ENCODE measurements at regions of chr11 and their contacts with region 1.

Region 1: GRCh38 chr11:12043959-12044819 is 35.8 kb upstream of the DKK3 start:
- DNase-seq: peak; percentile 98
- H3K4me3 ChIP-seq: no peak overlapping the region
- H3K27me3 ChIP-seq: no peaks in the 10 kb centered on the region
- CTCF ChIP-seq: peak; percentile 81

Region 2: DNA sequence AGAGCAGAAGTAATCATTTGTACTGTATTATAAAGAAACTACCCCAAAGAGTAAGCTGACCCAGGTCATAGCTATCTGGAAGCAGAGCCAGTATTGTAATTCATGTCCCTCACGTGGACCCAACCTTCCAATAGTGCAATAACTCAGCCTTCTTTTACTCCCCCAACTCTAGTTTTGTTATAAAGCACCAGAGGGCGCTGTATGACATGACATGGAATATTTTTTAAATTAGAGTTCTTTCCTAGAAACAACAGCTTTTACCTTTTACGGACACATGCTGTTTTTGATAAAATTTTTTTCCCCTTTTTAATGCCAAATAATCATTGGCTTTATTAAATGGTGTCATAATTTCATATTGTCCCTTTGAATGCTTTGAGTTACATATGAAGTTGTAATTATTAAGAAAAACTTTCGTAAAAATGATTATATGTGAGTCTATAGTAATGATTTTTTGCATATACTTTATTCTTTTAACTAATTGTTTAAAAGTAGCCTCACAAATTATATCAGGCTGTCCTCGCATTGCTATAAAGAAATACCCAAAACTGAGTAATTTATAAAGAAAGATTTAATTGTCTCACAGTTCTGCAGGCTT is 112.6 kb before region 1 on chr11:
- CTCF ChIA-PET with region 1: interaction called, 41 read pairs
- POLR2A ChIA-PET with region 1: no interaction called
- DNase-seq: no peak
- H3K4me3 ChIP-seq: no peak overlapping the region
- H3K27me3 ChIP-seq: no peaks in the 10 kb centered on the region
- CTCF ChIP-seq: peak; percentile 60

Region 3: GRCh38 chr11:12058425-12059110 is 14.4 kb after region 1 on chr11:
- CTCF ChIA-PET with region 1: interaction called, 12 read pairs
- POLR2A ChIA-PET with region 1: no interaction called
- DNase-seq: no peak
- H3K4me3 ChIP-seq: no peak overlapping the region
- H3K27me3 ChIP-seq: no peaks in the 10 kb centered on the region
- CTCF ChIP-seq: no peak

Region 4: GRCh38 chr11:12075822-12076821 is 31.9 kb after region 1 on chr11:
- CTCF ChIA-PET with region 1: interaction called, 16 read pairs
- POLR2A ChIA-PET with region 1: no interaction called
- DNase-seq: peak; percentile 100
- H3K4me3 ChIP-seq: no peak overlapping the region
- H3K27me3 ChIP-seq: no peaks in the 10 kb centered on the region
- CTCF ChIP-seq: no peak

Region 5: DNA sequence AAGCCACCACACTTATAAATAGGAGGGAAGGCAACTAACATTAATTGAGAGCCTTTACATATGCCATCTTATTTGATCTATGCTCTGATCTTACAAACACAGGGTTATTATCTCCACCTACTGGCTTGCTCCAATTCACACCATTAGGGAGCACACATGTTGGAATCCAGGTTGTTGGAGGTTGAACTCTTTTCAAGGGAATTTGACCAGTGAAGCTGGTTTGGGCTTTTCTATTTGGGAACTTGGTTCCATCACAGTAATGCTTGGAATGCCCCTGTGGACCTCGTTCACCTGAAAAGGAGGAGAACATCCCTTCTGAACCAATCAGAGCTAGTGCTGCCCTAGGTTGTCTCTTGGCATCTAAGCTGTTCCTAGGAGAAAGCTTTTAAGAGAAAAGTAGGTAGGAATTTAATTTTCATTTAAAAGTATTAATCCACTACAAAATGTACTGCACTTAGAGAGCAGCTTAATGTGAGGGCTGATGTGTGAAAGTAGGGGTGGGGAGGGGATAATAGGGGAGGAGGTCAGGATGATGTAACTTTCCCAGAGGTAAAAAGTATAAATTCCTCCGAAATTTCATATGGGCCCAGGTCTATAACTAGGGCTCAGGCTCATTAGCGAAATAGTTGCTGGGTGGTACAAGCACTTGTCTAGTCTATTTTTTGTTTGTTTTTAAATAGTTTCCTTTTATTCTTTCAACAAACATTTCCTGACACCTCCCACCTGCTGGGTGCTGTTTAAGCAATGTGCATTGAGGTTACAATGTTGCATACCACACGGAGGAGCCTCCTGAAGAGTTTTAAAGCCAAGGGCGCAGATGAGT is 58.6 kb after region 1 on chr11:
- CTCF ChIA-PET with region 1: interaction called, 18 read pairs
- POLR2A ChIA-PET with region 1: no interaction called
- DNase-seq: no peak
- H3K4me3 ChIP-seq: no peak overlapping the region
- H3K27me3 ChIP-seq: no peaks in the 10 kb centered on the region
- CTCF ChIP-seq: 0 out of 2 replicates have a peak, but pooled peaks have one; percentile 15

Region 6: GRCh38 chr11:12144330-12145180 is 100.4 kb after region 1 on chr11:
- CTCF ChIA-PET with region 1: no interaction called
- POLR2A ChIA-PET with region 1: no interaction called
- DNase-seq: no peak
- H3K4me3 ChIP-seq: no peak overlapping the region
- H3K27me3 ChIP-seq: no peaks in the 10 kb centered on the region
- CTCF ChIP-seq: no peak

Region 7: DNA sequence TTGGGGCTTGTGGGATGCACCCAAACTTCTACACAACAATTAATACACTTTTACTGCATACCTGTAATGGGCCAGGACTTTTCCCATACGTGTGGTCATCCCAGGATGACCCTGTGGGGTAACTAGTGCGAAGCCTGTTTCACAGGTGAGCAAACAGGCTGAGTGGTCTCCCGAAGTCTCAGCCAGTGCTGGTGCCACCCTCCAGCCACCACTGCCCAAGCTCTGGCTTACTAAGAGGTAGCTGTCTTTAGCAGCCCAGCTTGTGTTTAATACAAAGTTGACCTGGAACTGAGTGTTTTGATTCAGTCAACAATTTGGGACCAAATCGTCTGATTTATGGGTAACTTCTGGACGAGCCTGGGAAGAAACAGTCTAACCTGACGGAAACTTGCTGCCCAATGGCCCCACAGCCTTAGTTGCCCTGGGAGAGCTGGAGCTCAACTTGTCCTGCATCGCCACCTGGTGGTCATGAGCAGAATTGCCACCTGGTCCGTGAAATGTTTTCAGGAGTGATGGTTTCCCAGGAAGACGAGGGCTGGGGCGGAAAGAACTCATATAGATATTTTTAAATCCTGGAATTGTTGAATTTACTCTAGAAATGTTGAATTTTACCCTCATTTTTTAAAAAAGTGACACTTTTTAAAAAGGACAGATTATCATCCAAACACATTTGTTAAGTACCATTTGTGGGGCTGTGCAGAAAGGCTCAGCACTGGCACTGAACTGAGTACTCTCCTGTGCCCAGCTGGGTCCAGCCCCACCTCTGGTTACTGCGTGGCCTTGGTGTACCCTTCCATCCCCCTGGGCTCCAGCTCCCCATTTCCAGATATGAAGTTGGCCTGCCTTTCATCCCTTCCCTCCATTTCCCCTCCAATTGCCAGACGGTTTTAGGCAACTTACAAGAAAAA is 237.6 kb after region 1 on chr11:
- CTCF ChIA-PET with region 1: interaction called, 331 read pairs
- POLR2A ChIA-PET with region 1: interaction called, 3 read pairs
- DNase-seq: no peak
- H3K4me3 ChIP-seq: no peak overlapping the region
- H3K27me3 ChIP-seq: no peaks in the 10 kb centered on the region
- CTCF ChIP-seq: peak; percentile 88

Region 8: DNA sequence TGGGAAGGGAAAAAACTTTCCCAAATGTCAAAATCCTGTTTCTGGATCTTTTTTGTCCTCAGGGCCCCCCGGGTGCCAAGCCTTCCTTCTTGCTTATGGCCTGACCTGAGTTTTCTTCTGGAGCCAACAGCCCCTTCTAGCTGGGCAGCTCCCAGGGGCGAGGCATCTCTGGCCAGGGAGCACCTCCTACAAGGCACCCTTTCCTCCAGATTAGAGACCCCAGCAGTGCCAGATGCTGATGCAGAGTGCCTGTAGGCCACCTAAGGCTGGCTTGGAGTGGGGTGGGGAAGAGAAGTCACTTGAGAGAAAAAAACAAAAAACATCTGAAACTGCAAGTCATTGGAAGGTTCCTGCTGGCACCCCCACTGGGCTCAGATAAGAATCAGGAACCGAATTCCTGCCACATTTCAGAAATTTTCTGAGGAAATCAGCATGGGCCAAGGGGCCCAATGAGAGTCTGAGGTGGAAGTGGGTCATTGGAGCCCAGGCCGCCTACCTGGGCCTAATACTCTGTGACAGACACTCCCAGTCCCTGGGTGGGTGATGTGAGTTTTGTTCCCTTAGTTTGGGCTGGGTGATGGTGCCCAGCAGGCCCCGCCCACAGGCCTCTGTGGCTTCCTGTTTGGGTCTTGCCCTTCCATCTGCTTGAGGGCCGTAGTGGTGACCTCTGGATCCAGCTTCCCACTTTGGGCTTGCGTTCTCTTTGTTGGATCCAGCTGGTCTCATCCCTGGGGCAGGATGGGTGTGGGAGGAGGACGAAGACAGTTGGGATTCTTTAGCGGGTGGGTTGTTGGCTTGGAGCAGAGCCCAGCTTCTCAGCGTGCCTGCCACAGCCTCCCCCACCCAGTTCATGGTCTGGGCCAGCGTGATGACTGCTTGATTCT is 373.8 kb after region 1 on chr11:
- CTCF ChIA-PET with region 1: no interaction called
- POLR2A ChIA-PET with region 1: no interaction called
- DNase-seq: peak; percentile 77
- H3K4me3 ChIP-seq: no peak overlapping the region
- H3K27me3 ChIP-seq: no peaks in the 10 kb centered on the region
- CTCF ChIP-seq: no peak

Measured in BJ (cell line).